WTC11 (cell line): ENCODE measurements at regions of chr9 and their contacts with region 1.

Region 1: GRCh38 chr9:104863180-104863883 is 64.6 kb downstream of the ABCA1 start:
- DNase-seq: peak; percentile 54
- ATAC-seq: peak; percentile 88
- H3K4me3 Mint-ChIP-seq: peak overlapping the region; percentile 34; the same call in 1 of the 2 replicates
- H3K27ac Mint-ChIP-seq: peak overlapping the region; percentile 79
- H3K4me1 Mint-ChIP-seq: peaks cover 44% of the 10 kb centered on the region
- H3K27me3 Mint-ChIP-seq: no peaks in the 10 kb centered on the region; the same call in 1 of the 2 replicates
- CTCF ChIP-seq: peak; percentile 41

Region 2: DNA sequence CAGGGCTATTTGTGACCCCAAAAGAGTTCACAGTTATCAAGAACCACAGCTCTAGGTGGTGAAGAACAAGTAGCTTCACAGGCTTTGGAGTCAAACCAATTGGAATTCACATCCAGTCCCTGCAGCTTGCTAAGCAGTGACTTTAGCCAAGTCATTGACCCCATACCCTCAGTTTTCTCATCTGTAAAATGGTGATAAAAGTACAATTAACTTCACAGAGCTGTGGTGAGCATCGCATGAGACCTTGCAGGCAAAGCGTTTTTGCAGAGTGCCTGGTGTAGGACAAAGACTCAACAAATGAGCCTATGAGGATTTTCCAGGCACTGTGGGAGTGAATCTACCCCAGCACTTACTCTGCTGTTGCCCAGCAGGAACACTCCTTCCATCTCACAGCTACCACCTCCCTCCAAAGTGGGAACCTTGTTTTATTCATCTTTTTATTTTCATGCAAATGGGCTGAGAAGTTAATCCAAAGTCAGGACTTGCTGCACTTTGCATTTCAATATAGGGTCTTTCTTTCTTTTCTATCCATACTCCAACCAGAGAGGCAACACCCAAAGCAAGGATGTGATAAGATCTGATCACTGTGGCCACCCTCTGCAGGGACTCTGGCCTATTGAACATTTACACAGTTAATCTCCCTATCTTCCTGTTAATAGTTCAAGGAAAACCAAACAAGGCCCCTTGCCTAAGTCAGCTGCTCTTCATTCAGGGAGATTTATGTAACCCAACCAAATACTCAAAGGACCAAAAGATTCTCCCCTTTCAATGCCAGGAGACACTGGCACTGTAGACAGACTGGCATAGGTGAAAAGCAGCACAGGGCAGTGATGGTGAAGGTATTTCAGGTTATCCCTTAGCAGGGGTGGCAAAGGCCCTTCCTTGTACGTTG is 22.7 kb after region 1 on chr9:
- CTCF ChIA-PET with region 1: interaction called, 15 read pairs
- POLR2A ChIA-PET with region 1: interaction called, 5 read pairs
- DNase-seq: no peak
- ATAC-seq: peak; percentile 85
- H3K4me3 Mint-ChIP-seq: no peak overlapping the region; the same call in 1 of the 2 replicates
- H3K27ac Mint-ChIP-seq: peak overlapping the region; percentile 70
- H3K4me1 Mint-ChIP-seq: peaks cover 84% of the 10 kb centered on the region
- H3K27me3 Mint-ChIP-seq: peaks cover 33% of the 10 kb centered on the region
- CTCF ChIP-seq: no peak

Region 3: GRCh38 chr9:104968025-104968982 is 105.0 kb after region 1 on chr9:
- CTCF ChIA-PET with region 1: interaction called, 13 read pairs
- POLR2A ChIA-PET with region 1: interaction called, 3 read pairs
- DNase-seq: peak; percentile 86
- ATAC-seq: peak; percentile 84
- H3K4me3 Mint-ChIP-seq: peak overlapping the region; percentile 95
- H3K27ac Mint-ChIP-seq: peak overlapping the region; percentile 63
- H3K4me1 Mint-ChIP-seq: peaks cover 33% of the 10 kb centered on the region
- H3K27me3 Mint-ChIP-seq: peaks cover 3% of the 10 kb centered on the region; the same call in 1 of the 2 replicates
- CTCF ChIP-seq: no peak

Region 4: GRCh38 chr9:105046907-105047741 is 183.8 kb after region 1 on chr9:
- CTCF ChIA-PET with region 1: interaction called, 12 read pairs
- POLR2A ChIA-PET with region 1: no interaction called
- DNase-seq: no peak
- ATAC-seq: no peak
- H3K4me3 Mint-ChIP-seq: no peak overlapping the region
- H3K27ac Mint-ChIP-seq: no peak overlapping the region
- H3K4me1 Mint-ChIP-seq: peaks cover 15% of the 10 kb centered on the region
- H3K27me3 Mint-ChIP-seq: no peaks in the 10 kb centered on the region
- CTCF ChIP-seq: no peak

Region 5: DNA sequence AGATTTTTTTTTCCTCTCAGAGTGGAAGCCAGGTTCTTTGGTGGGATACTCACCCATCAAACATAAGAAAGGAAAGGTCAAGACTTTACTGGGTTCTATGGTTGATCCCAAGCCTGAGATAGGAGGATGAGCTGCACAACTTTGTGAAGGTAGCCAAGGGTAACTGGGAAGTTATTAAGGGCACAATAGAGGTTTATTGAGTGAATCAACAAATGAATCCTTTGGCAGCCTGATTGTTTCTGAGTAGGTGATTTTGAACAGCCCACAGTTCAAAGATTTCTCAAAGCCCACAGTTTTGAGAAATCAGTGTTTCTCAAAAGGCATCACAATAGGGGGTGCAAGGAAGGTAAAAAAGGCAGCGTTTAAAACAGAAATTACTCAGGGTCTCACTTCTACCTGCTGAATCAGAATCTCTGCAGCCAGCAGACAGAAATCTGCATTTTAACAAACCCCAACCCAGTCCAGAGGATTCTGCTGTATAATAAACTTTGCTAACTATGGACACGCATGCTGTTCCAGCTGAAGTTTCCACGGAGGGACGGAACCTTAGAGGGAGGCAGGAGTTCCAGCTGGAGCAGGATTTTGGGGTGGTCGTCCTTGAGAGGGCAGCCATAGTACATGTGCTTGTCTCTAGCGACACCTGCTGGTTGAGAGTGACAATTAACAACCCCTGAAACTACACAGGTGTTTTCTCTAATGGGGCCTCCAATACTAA is 551.8 kb after region 1 on chr9:
- CTCF ChIA-PET with region 1: interaction called, 24 read pairs
- POLR2A ChIA-PET with region 1: interaction called, 3 read pairs
- DNase-seq: peak; percentile 75
- ATAC-seq: peak; percentile 88
- H3K4me3 Mint-ChIP-seq: peak overlapping the region; percentile 65
- H3K27ac Mint-ChIP-seq: no peak overlapping the region
- H3K4me1 Mint-ChIP-seq: peaks cover 25% of the 10 kb centered on the region
- H3K27me3 Mint-ChIP-seq: peaks cover 17% of the 10 kb centered on the region
- CTCF ChIP-seq: peak; percentile 86; the same call in 1 of the 2 replicates